ENCODE measurements at regions of chr13 and their contacts with region 1.

Region 1: GRCh38 chr13:24683838-24684599 is 3.8 kb downstream of the ATP12A start:
- DNase-seq: peak in 7 of 10 donors; percentile 28 to 91 (median 63)

Region 2: DNA sequence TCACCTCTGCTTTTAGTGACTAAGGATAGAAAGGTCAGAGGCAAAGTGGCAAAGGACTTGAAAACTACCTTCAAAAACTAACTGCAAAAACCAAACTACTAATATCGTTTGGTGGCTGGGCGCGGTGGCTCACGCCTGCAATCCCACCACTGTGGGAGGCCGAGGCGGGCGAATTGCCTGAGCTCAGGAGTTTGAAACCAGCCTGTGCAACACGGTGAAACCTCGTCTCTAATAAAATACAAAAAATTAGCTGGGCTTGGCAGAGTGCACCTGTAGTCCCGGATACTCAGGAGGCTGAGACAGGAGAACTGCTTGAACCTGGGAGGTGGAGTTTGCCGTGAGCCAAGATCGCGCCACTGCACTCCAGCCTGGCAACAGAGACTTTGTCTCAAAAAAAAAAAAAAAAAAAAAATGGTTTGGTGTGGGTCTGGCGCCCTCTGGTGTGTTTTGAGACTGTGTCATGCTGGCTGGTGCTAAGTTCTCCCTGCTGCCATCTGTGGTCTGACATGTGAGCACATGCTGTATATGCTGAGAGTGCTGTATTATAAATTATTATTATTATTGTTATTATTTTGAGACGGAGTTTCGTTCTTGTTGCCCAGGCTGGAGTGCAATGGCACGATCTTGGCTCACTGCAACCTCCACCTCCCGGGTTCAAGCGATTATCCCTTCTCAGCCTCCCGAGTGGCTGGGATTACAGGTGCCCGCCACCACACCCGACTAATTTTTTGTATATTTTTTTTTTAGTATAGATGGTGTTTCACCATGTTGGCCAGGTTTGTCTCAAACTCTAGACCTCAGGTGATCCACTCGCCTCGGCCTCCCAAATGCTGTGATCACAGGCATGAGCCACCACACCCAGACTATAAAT is 43.9 kb after region 1 on chr13:
- intact Hi-C with region 1: loop called (anchors 1 kb)
- DNase-seq: peak in 7 of 10 donors; percentile 23 to 90 (median 48)

Measured in posterior cingulate gyrus (tissue), 11 donors.